ENCODE measurements at regions of chr10 and their contacts with region 1.

Region 1: DNA sequence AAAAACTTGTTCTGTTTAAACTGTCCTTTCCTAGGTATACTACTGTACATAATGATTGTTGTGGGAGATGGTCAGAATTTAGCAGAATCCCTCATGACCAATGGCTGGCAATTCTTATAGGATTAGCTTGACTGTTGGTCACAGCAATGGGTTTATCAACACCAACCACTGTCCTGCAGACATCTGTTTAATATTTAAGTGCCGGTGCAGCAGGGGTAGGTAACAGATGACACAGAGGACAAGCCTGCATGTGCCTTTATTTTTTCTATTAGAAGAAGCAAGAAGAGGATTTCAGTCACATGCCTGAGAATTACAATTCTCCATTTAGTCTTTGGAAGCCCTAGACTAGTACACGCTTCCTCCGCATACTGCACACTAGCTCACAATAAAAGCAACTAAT is 48.4 kb downstream of the CCDC6 start:
- DNase-seq: no peak
- ATAC-seq: no peak
- H3K4me3 ChIP-seq: no peak overlapping the region
- H3K27ac ChIP-seq: no peak overlapping the region
- H3K4me1 ChIP-seq: no peaks in the 10 kb centered on the region
- H3K27me3 ChIP-seq: no peaks in the 10 kb centered on the region
- CTCF ChIP-seq: no peak

Region 2: DNA sequence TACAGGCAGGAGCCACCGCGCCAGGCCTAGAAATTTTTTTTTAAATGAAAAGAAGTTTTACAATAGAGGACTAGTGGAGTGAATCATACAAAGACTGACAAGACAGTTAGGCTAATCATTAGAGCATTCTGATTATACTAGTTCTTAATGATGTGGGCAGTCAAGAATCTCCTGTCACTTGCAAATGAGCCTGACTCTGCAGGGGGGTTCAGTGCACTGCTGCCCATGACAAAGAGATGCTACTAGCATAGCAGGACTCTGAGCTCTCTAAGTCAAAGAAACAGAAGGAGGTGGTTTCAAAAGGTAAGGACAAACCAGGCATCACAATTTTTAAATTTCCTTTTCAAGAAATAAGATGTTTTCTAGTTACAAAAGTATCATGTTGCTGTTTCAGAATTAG is 10.6 kb before region 1 on chr10:
- CTCF ChIA-PET with region 1: no interaction called
- POLR2A ChIA-PET with region 1: interaction called, 11 read pairs
- in situ Hi-C with region 1: no loop called
- intact Hi-C with region 1: no loop called
- DNase-seq: no peak
- ATAC-seq: no peak
- H3K4me3 ChIP-seq: no peak overlapping the region
- H3K27ac ChIP-seq: no peak overlapping the region
- H3K4me1 ChIP-seq: no peaks in the 10 kb centered on the region
- H3K27me3 ChIP-seq: no peaks in the 10 kb centered on the region
- CTCF ChIP-seq: no peak

Region 3: DNA sequence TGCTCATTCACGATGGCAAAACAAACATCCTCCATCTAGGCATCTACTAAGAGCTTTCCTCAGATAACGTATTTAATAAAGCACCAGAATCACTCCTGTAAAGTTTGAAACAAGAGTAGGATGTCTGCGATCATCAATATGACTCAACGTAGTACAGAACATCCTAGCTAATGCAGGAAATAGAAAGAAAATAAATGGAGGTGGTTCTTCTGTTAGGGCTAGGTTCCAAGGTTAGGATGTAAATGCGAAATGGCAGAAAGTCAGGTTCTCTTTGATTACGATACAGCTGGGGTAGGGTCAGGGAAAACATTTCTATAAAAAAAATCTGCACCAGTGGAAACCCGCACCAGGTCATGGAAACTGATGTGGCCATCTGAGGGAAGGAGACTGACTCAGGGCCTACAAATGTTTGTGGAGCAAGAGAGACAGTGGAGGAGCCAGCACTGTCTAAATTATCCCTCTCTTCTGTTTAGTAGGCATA is 19.3 kb after region 1 on chr10:
- CTCF ChIA-PET with region 1: interaction called, 3 read pairs
- POLR2A ChIA-PET with region 1: interaction called, 11 read pairs
- in situ Hi-C with region 1: no loop called
- intact Hi-C with region 1: no loop called
- DNase-seq: no peak
- ATAC-seq: no peak
- H3K4me3 ChIP-seq: no peak overlapping the region
- H3K27ac ChIP-seq: no peak overlapping the region
- H3K4me1 ChIP-seq: no peaks in the 10 kb centered on the region
- H3K27me3 ChIP-seq: no peaks in the 10 kb centered on the region
- CTCF ChIP-seq: no peak